ENCODE measurements at regions of chr11 and their contacts with region 1.

Region 1: DNA sequence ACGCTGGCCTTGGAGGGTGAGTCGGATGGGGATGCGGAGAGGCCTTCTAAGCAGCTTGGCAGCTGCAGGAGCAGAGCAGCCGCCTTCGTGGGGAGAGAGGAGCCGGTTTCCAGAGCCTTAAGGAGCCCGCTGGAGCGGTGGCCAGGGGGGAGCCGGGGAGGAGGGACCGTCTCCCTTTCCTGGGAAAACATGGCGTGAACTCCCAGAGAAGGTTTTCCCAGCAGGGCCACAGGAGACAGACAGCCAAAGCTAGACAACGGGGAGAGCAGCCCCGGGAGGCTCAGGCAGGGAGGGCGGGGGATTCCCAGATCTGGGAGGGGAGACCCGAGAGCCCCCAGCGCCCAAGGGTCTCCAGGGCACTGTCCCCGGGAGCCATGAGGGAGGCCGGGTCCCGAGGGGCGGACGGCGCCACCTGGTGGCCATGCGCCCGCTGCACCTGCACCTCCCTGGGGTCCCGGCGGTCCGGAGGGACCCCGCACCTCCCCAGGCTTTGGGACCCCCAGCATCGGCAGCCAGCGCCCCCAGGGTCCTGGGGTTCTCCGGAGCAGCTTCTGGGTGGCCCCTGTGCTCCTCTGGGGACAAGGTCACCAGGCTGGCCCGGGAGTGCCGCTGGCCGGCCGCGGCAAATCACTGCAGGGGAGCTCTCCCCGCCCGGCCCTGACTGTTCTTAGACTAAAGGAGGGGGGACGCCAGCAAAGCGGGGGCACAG is 2.4 kb upstream of the SYT8 start:
- DNase-seq: peak; percentile 72
- H3K4me3 Mint-ChIP-seq: no peak overlapping the region
- H3K27ac Mint-ChIP-seq: no peak overlapping the region
- H3K4me1 Mint-ChIP-seq: no peaks in the 10 kb centered on the region
- H3K27me3 Mint-ChIP-seq: peaks cover 63% of the 10 kb centered on the region

Region 2: GRCh38 chr11:1652771-1653540 is 179.4 kb before region 1 on chr11:
- CTCF ChIA-PET with region 1: interaction called, 49 read pairs
- DNase-seq: peak; percentile 82
- H3K4me3 Mint-ChIP-seq: no peak overlapping the region
- H3K27ac Mint-ChIP-seq: no peak overlapping the region
- H3K4me1 Mint-ChIP-seq: no peaks in the 10 kb centered on the region
- H3K27me3 Mint-ChIP-seq: peaks cover 52% of the 10 kb centered on the region

Region 3: DNA sequence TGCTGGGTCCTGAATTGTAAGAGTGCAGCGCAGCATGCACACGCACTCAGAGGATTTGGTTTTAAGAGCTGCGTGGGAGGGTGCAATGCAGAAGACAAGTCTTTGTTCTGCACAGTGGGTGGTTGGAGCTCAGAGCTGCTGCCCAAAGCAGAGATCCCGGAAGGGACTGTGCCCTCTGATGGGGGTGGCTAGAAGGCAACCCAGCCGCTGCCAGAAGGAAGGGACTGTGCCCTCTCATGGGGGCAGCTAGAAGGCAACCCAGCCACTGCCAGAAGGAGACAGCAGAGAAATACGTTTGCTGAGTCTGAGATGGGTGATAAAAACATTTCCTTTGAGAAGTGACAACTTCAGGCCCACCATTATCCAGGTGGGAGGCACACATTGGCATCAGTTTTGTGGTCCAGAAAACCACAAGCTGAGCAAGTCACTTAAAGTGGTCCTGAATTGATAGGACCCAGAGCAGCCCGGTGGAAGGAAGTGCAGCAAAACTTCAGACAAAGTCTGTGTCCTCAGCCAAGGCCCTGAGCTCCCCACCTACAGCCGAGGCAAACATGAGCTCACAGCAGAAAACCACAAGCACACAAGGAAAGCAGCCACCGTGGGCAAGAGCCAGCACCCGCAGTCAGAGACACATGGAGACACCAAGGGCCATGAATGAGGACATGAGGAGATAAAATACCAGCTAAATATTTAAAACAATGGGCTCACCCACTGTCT is 131.1 kb before region 1 on chr11:
- CTCF ChIA-PET with region 1: interaction called, 39 read pairs
- DNase-seq: no peak
- H3K4me3 Mint-ChIP-seq: no peak overlapping the region
- H3K27ac Mint-ChIP-seq: no peak overlapping the region
- H3K4me1 Mint-ChIP-seq: peaks cover 5% of the 10 kb centered on the region
- H3K27me3 Mint-ChIP-seq: peaks cover 26% of the 10 kb centered on the region

Region 4: DNA sequence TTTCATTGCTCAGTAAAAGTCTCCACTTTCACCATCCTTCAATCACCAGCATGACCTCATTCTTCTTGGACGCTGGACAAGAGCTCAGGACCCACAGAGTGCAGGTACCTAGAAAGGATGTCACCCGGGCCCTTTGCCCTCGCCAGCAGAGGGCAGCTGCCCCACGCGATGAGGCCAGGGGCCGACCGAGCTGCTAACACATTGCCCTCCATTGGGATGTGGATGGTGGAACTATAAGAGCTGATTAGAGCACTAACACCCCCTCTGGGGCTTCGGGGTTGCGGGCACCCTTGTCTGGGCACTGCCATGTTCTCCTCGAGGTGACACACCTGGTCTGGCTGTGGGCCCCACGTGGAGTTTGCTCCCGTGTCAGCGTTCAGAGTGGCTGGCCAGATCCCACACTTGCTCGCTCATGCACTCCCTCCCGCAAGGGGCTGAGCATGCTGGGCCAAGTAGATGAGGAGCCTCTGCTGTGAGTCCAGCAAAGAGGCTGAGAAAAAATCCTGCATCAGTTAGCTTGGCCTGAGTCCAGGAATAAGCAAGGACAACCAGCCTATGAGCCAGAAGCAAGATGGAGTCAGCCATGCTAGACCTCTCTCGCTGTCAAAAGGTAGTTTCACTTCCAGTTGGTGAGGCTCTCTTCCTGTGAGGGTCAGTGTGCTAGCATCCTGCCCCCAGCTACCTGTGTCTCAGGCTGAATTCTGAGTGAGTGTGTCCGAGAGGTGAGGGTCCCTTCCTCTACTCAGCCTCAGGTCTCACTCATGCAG is 125.5 kb before region 1 on chr11:
- CTCF ChIA-PET with region 1: interaction called, 39 read pairs
- DNase-seq: peak; percentile 52
- H3K4me3 Mint-ChIP-seq: no peak overlapping the region
- H3K27ac Mint-ChIP-seq: no peak overlapping the region
- H3K4me1 Mint-ChIP-seq: no peaks in the 10 kb centered on the region
- H3K27me3 Mint-ChIP-seq: peaks cover 19% of the 10 kb centered on the region

Region 5: GRCh38 chr11:1842491-1843473 is 10.4 kb after region 1 on chr11:
- CTCF ChIA-PET with region 1: interaction called, 10 read pairs
- DNase-seq: no peak
- H3K4me3 Mint-ChIP-seq: peak overlapping the region; percentile 7
- H3K27ac Mint-ChIP-seq: peak overlapping the region; percentile 93
- H3K4me1 Mint-ChIP-seq: peaks cover 57% of the 10 kb centered on the region
- H3K27me3 Mint-ChIP-seq: peaks cover 45% of the 10 kb centered on the region

Region 6: GRCh38 chr11:1862588-1863351 is 30.4 kb after region 1 on chr11:
- CTCF ChIA-PET with region 1: no interaction called
- DNase-seq: no peak
- H3K4me3 Mint-ChIP-seq: no peak overlapping the region
- H3K27ac Mint-ChIP-seq: no peak overlapping the region
- H3K4me1 Mint-ChIP-seq: peaks cover 10% of the 10 kb centered on the region
- H3K27me3 Mint-ChIP-seq: no peaks in the 10 kb centered on the region

Region 7: DNA sequence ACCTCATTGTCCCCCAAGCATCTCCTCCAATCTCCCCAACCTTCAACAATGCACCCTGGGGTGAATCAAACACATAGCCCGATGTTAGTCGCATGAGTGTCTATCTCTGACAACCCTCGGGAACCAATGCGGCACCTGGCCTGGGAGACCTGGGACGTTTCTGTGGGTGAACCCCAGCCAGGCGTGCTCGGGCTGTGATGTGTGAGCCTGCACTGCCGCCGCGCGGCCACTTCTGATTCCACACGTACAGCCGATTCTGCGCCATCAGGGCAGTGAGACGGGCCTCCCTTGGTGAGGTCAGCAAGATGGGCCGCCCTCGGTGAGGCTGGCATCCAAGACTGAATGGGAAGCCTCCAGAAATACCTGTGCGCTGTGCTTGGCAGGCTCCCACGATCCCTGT is 170.4 kb after region 1 on chr11:
- CTCF ChIA-PET with region 1: interaction called, 35 read pairs
- DNase-seq: no peak
- H3K4me3 Mint-ChIP-seq: no peak overlapping the region
- H3K27ac Mint-ChIP-seq: no peak overlapping the region
- H3K4me1 Mint-ChIP-seq: no peaks in the 10 kb centered on the region
- H3K27me3 Mint-ChIP-seq: no peaks in the 10 kb centered on the region

Region 8: GRCh38 chr11:2151500-2152257 is 319.3 kb after region 1 on chr11:
- CTCF ChIA-PET with region 1: interaction called, 32 read pairs
- DNase-seq: peak; percentile 87
- H3K4me3 Mint-ChIP-seq: no peak overlapping the region
- H3K27ac Mint-ChIP-seq: no peak overlapping the region
- H3K4me1 Mint-ChIP-seq: peaks cover 6% of the 10 kb centered on the region
- H3K27me3 Mint-ChIP-seq: peaks cover 63% of the 10 kb centered on the region

Measured in activated naive CD4-positive, alpha-beta T cell treated with anti-CD3 and anti-CD28 coated beads, Interleukin-2, amount 10 ng/mL, durations not matched to agents 7 days and 5 days (primary cell).